ENCODE measurements at regions of chr9 and their contacts with region 1.

Region 1: DNA sequence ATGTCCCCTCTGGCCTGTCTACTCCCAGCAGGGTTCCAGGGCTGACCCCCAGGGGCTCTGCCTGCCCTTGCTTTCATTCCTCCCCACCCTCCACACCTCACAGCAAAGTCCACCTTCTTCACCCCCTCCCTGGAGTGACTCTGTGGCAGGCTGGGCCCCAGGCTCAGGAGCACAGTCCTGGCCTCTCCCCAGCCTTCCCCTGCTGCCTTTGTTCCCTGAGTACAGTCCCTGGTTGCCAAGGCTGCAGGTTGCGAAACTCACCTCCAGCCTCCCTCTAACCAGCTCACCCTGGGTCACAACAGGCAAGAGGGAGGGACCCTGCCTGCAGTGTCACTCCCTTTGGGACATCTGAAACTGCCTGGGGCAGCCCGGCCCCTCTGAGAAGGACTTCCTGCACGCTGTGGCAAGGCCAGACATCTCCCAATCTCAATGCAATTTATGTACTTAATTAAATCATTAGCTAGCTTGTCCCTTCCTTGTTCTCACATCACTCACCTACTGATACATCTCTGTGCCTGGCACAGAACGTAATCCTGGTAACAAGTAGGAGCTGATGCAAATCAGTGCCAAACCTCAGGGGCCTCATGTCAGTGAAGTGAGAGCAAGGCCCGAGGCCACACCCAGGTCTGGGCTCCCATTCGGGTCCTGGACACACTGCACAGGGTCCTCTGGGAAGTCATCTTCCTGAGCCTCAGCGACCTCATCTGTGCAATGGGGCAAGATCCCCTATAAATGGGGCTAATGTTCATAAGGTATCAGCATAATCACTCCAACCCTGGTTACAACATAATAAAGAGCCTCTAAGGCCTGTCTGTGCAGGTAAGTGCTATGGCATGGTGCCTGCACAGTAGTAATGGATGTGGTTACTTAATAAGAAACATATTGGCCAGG is 27.3 kb upstream of the TRIM14 start:
- DNase-seq: peak; percentile 84
- H3K4me3 ChIP-seq: no peak overlapping the region
- H3K27ac ChIP-seq: peak overlapping the region; percentile 78
- H3K4me1 ChIP-seq: peaks cover 26% of the 10 kb centered on the region
- H3K27me3 ChIP-seq: no peaks in the 10 kb centered on the region
- CTCF ChIP-seq: no peak

Region 2: GRCh38 chr9:98064623-98065392 is 81.5 kb before region 1 on chr9:
- CTCF ChIA-PET with region 1: no interaction called
- dilution Hi-C with region 1: no loop called
- in situ Hi-C with region 1: no loop called
- intact Hi-C with region 1: no loop called
- DNase-seq: no peak
- H3K4me3 ChIP-seq: no peak overlapping the region
- H3K27ac ChIP-seq: no peak overlapping the region
- H3K4me1 ChIP-seq: no peaks in the 10 kb centered on the region
- H3K27me3 ChIP-seq: no peaks in the 10 kb centered on the region
- CTCF ChIP-seq: no peak

Region 3: DNA sequence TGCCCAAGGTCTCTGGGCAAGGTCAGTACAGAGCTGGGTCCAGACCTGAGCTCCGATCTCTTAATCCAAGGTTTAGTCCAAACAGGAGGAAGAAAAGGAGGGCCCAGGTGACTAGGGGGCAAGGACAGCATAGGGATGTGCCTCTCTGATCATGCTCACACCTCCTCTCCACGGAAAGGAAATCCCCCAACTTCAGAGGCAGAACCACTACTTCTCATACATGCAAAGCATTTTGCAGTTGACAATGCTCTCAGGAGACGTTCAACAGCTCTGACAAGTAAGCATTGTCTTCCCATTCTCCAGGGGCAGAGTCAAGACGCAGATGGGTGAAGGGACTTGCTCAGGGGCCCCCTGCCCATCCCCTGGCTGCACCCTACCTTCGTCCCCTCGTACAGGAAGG is 54.8 kb after region 1 on chr9:
- CTCF ChIA-PET with region 1: interaction called, 10 read pairs
- dilution Hi-C with region 1: no loop called
- in situ Hi-C with region 1: no loop called
- intact Hi-C with region 1: no loop called
- DNase-seq: no peak
- H3K4me3 ChIP-seq: no peak overlapping the region
- H3K27ac ChIP-seq: no peak overlapping the region
- H3K4me1 ChIP-seq: no peaks in the 10 kb centered on the region
- H3K27me3 ChIP-seq: no peaks in the 10 kb centered on the region
- CTCF ChIP-seq: no peak